ENCODE measurements at regions of chr7 and their contacts with region 1.

Region 1: GRCh38 chr7:92731335-92732063 is 104.9 kb downstream of the CDK6 start:
- DNase-seq: peak; percentile 71
- H3K4me3 Mint-ChIP-seq: peak overlapping the region; percentile 10
- H3K27ac Mint-ChIP-seq: peak overlapping the region; percentile 96
- H3K4me1 Mint-ChIP-seq: peaks cover 71% of the 10 kb centered on the region
- H3K27me3 Mint-ChIP-seq: no peaks in the 10 kb centered on the region

Region 2: GRCh38 chr7:92621026-92621540 is 110.4 kb before region 1 on chr7:
- CTCF ChIA-PET with region 1: no interaction called
- POLR2A ChIA-PET with region 1: no interaction called
- intact Hi-C with region 1: loop called (anchors 1 kb)
- DNase-seq: peak; percentile 86
- H3K4me3 Mint-ChIP-seq: peak overlapping the region; percentile 49
- H3K27ac Mint-ChIP-seq: peak overlapping the region; percentile 93
- H3K4me1 Mint-ChIP-seq: peaks cover 53% of the 10 kb centered on the region
- H3K27me3 Mint-ChIP-seq: no peaks in the 10 kb centered on the region

Region 3: GRCh38 chr7:92682903-92683539 is 48.5 kb before region 1 on chr7:
- CTCF ChIA-PET with region 1: no interaction called
- POLR2A ChIA-PET with region 1: interaction called, 3 read pairs
- intact Hi-C with region 1: loop called (anchors 1 kb)
- DNase-seq: peak; percentile 20
- H3K4me3 Mint-ChIP-seq: no peak overlapping the region
- H3K27ac Mint-ChIP-seq: peak overlapping the region; percentile 87
- H3K4me1 Mint-ChIP-seq: peaks cover 85% of the 10 kb centered on the region
- H3K27me3 Mint-ChIP-seq: no peaks in the 10 kb centered on the region

Region 4: DNA sequence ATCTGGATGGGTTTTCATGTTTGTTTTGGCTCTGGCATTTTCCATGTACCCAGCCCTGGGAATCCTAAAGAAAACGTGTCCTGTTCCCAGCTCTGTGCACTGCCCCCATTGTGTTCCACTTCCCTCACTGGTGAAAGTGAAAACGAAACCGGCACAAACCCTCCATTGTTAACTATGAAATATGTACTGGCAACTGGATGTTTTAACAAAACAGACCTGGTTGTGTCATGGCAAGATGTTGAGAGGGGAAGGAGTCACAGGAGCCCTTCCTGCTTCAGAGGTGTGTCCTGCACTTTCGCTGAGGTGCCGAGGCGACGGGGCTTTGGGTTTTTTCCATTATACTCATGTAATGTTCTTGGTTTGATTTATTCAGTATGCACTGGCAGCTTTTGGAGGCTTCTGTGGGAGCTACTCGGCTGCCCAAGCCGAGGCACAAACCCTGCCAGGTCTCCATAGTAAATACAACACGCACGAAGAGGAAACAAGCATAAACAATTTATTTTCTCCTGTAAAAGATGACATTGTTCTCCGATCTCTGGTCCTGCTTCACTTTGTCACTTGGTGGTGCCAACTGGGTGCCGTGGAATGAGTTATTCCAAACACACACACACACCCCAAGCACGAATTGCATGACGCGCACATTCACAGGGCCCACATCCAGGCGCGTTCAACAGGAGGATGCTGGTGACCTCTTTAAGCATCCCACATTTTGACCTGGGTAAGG is 13.3 kb before region 1 on chr7:
- CTCF ChIA-PET with region 1: interaction called, 5 read pairs
- POLR2A ChIA-PET with region 1: interaction called, 4 read pairs
- intact Hi-C with region 1: loop called (anchors 1 kb)
- DNase-seq: peak; percentile 82
- H3K4me3 Mint-ChIP-seq: peak overlapping the region; percentile 73
- H3K27ac Mint-ChIP-seq: peak overlapping the region; percentile 83
- H3K4me1 Mint-ChIP-seq: peaks cover 60% of the 10 kb centered on the region
- H3K27me3 Mint-ChIP-seq: no peaks in the 10 kb centered on the region

Region 5: GRCh38 chr7:92768501-92769393 is 37.2 kb after region 1 on chr7:
- CTCF ChIA-PET with region 1: interaction called, 3 read pairs
- POLR2A ChIA-PET with region 1: interaction called, 5 read pairs
- intact Hi-C with region 1: loop called (anchors 1 kb)
- DNase-seq: peak; percentile 64
- H3K4me3 Mint-ChIP-seq: peak overlapping the region; percentile 48
- H3K27ac Mint-ChIP-seq: peak overlapping the region; percentile 83
- H3K4me1 Mint-ChIP-seq: peaks cover 72% of the 10 kb centered on the region
- H3K27me3 Mint-ChIP-seq: no peaks in the 10 kb centered on the region

Region 6: DNA sequence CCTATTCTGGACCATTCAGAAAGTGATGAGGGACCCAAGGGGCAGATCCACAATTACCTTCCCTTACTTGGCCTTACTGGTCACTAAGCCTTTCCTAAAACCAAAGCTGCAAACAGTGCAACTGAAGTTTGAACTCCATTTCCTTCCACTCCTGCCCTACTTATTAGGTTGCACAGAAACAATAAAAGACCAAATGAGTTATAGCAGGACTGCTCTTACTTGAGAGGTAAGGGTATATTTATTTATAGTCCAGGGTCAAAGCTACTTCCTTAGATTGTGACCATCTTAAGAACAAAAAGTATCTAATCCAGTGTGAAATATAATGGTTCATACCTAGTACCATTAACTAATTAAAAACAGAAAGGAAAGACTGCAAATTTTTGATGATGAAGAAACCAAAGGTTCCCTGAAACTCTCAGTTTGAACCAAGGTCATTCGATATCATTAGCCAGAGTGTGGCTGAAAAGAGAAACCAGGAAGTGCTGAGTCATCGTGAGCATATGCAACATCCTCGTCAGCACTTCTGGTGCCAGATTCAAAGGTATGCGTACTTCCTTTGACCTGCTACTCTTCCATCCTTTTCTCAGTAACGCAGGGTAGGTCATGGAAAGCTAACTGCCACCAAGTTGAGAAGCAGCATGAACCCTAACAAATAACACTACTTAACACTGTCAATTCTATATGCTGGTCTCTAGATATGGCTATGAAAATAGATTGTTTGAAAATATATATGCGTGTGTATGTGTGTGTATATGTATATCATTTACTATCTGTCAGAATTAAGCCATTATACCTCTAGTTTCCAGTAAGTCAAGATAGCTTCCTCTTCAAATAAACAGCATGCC is 78.1 kb after region 1 on chr7:
- CTCF ChIA-PET with region 1: interaction called, 3 read pairs
- POLR2A ChIA-PET with region 1: interaction called, 8 read pairs
- intact Hi-C with region 1: loop called (anchors 1 kb)
- DNase-seq: peak; percentile 83
- H3K4me3 Mint-ChIP-seq: peak overlapping the region; percentile 39
- H3K27ac Mint-ChIP-seq: peak overlapping the region; percentile 89
- H3K4me1 Mint-ChIP-seq: peaks cover 73% of the 10 kb centered on the region
- H3K27me3 Mint-ChIP-seq: no peaks in the 10 kb centered on the region